Activated B cell treated with CpG ODN at 0.5 μM for 24 hours (primary cell): ENCODE measurements at regions of chr2 and their contacts with region 1.

Region 1: DNA sequence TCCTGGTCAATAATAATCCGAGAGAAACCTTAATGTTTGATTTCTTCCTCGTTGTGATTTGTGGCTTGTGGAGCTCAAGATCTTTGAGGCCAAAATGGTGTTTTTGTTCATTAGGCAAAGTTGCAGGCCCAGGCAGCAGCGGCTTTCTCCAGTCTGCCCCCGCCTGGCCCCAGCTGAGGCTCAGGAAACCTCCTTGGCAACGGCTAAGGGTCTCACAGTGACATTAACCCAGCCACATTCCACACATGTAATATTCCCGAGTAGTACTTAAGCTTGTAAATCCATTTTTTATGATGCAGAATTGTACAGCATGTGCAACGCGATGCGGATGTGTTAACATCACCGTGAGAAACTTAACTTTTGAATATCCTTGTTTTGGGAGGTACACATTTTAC is 200.1 kb downstream of the BCL11A start:
- DNase-seq: no peak
- ATAC-seq: peak; percentile 5
- H3K4me3 Mint-ChIP-seq: peak overlapping the region; percentile 52
- H3K27ac Mint-ChIP-seq: peak overlapping the region; percentile 97
- H3K4me1 Mint-ChIP-seq: peaks cover 100% of the 10 kb centered on the region
- H3K27me3 Mint-ChIP-seq: no peaks in the 10 kb centered on the region
- CTCF ChIP-seq: no peak

Region 2: DNA sequence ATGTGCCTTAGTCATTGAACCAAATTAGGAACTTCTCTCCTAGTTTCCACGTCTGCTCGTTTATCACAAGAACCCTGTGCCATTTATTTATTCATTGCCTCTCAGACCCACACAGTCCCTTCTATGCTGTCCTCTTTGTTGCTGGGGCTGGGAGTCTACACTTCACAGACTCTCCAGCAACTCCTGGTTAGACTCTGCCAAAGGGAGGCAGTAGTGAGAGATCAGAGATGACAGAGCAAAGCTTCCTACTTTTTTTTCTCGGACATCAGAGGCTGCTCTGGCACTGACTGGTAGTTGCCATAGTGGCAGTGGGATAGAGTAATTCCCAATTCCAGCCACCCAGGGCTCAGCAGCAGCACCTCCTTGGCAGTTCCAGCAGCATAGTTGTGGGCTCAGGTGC is 77.4 kb before region 1 on chr2:
- CTCF ChIA-PET with region 1: no interaction called
- POLR2A ChIA-PET with region 1: no interaction called
- intact Hi-C with region 1: no loop called
- DNase-seq: no peak
- ATAC-seq: no peak
- H3K4me3 Mint-ChIP-seq: no peak overlapping the region
- H3K27ac Mint-ChIP-seq: no peak overlapping the region
- H3K4me1 Mint-ChIP-seq: no peaks in the 10 kb centered on the region
- H3K27me3 Mint-ChIP-seq: no peaks in the 10 kb centered on the region
- CTCF ChIP-seq: no peak

Region 3: DNA sequence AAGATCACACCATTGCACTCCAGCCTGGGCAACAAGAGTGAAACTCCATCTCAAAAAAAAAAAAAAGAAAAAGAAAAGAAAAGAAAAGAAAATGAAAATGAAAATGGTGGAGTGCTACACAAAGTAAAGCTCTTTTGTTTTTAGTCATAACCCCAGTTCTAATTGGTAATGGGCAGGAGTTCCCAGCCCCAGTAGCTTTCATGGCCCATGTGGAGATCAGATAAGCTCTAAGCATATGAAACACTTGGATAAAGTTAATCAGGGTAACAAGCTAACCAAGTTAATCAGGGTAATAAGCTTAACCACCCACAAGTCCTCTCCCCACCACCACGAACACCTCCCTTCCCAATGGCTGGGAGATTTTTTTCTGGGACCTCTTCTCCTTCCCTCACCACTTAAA is 40.8 kb before region 1 on chr2:
- CTCF ChIA-PET with region 1: no interaction called
- POLR2A ChIA-PET with region 1: interaction called, 11 read pairs
- intact Hi-C with region 1: no loop called
- DNase-seq: no peak
- ATAC-seq: peak; percentile 32
- H3K4me3 Mint-ChIP-seq: no peak overlapping the region
- H3K27ac Mint-ChIP-seq: peak overlapping the region; percentile 44
- H3K4me1 Mint-ChIP-seq: peaks cover 88% of the 10 kb centered on the region
- H3K27me3 Mint-ChIP-seq: no peaks in the 10 kb centered on the region
- CTCF ChIP-seq: no peak

Region 4: GRCh38 chr2:60366135-60366712 is 12.8 kb after region 1 on chr2:
- CTCF ChIA-PET with region 1: interaction called, 8 read pairs
- POLR2A ChIA-PET with region 1: interaction called, 75 read pairs
- intact Hi-C with region 1: loop called (anchors 1 kb)
- DNase-seq: no peak
- ATAC-seq: peak; percentile 60
- H3K4me3 Mint-ChIP-seq: peak overlapping the region; percentile 62
- H3K27ac Mint-ChIP-seq: peak overlapping the region; percentile 95
- H3K4me1 Mint-ChIP-seq: peaks cover 99% of the 10 kb centered on the region
- H3K27me3 Mint-ChIP-seq: no peaks in the 10 kb centered on the region
- CTCF ChIP-seq: no peak

Region 5: DNA sequence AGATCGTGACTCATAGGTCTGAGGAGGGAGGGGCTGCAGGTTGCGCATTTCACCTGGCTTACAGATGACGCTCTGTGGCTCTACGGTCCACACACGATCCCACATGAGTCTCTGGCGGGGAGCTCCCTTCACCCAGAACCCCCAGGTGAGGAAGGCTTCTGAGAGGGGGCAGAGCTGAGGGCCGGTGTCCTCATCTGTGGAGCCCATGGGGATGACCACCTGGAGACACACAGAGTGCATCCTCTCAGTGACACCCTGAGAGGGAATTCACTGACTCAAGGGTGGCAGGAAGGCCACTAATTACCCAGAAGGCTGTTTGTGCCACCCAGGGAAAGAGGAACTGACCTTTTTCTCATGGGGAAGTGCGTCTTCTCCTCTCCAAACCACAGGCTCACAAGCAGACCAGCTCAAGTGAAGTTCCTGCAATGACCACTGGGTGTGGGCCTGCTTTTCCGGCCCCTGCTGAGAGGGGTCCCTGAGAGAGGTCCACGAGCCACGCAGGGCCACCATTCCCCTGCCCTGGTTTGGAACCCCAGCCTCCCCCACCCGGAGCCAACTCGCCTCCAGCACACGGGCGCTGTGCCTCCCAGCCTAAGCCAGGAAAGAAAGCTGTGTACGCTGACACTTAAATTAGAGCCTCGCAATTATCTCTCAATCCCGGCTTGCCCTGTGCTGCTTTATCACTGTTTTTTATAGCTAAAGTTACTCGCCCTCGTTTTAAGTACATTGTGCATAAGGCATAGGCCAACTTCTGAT is 86.0 kb after region 1 on chr2:
- CTCF ChIA-PET with region 1: interaction called, 11 read pairs
- POLR2A ChIA-PET with region 1: interaction called, 104 read pairs
- intact Hi-C with region 1: loop called (anchors 1 kb)
- DNase-seq: peak; percentile 72
- ATAC-seq: peak; percentile 93
- H3K4me3 Mint-ChIP-seq: peak overlapping the region; percentile 76
- H3K27ac Mint-ChIP-seq: peak overlapping the region; percentile 99
- H3K4me1 Mint-ChIP-seq: peaks cover 83% of the 10 kb centered on the region
- H3K27me3 Mint-ChIP-seq: no peaks in the 10 kb centered on the region
- CTCF ChIP-seq: no peak

Region 6: DNA sequence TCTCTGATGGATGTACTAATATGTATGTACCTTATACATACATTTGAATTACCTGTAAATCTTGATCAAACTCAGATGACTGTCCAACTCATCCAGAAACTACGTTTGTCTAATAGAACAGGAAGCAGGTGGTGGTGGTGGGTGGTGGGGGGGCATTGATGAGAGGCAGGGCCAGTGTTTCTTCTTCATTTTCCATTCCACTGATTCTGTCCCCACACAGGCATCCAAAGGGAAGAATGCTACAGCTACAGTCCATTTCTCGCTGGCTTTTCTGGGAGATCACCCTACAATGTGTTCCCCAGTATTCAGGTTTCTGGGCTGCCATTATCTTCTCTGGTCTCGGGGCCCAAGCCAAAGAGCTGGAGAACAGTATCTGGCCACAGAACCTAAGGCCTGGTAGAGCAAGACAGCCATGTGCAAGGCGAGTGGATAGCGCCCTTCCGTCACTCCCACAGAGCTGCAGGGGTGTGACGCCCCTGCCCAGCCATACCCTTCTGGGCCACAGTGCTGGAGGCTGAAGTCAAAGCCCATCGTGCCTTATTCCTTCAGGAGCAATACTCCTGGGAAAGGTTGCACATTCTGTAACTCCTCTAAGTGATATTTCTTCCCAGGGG is 145.5 kb after region 1 on chr2:
- CTCF ChIA-PET with region 1: no interaction called
- POLR2A ChIA-PET with region 1: interaction called, 7 read pairs
- intact Hi-C with region 1: loop called (anchors 5 kb)
- DNase-seq: peak; percentile 40
- ATAC-seq: peak; percentile 64
- H3K4me3 Mint-ChIP-seq: peak overlapping the region; percentile 64
- H3K27ac Mint-ChIP-seq: peak overlapping the region; percentile 84
- H3K4me1 Mint-ChIP-seq: peaks cover 99% of the 10 kb centered on the region
- H3K27me3 Mint-ChIP-seq: no peaks in the 10 kb centered on the region
- CTCF ChIP-seq: no peak